Ovary (tissue), 10 donors: ENCODE measurements at regions of chr14 and their contacts with region 1.

Region 1: GRCh38 chr14:88551094-88551870 is 3.5 kb downstream of the PTPN21 start:
- DNase-seq: peak; percentile 77 to 89 (median 82)
- H3K4me3 ChIP-seq: peak overlapping the region; percentile 65
- H3K27ac ChIP-seq: peak overlapping the region; percentile 30 to 53
- H3K4me1 ChIP-seq: peaks cover 3% of the 10 kb centered on the region
- H3K27me3 ChIP-seq: no peaks in the 10 kb centered on the region
- CTCF ChIP-seq: peak in 2 of 3 donors; percentile 42 to 49
- EP300 ChIP-seq: no peak
- POLR2A ChIP-seq: peak; percentile 38

Region 2: DNA sequence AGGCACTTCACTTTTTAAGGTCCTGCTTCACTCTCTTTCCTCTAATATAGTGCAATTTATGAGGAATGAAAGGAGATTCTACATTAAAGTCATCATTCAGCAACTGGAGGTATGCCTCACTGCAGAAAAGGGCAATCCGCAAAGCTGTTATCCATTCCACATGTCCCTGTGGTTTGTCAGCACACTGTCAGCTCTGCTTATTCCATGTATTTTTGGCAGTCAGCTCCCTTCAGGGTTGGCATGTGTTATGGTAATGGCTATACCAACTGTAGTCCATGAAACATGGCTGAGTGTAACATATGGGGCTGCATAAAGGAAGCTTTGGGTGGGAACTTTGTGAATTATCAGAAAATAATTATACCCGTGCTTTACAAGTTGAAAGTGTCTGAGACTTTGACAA is 712.4 kb before region 1 on chr14:
- intact Hi-C with region 1: no loop called
- DNase-seq: no peak
- H3K4me3 ChIP-seq: no peak overlapping the region
- H3K27ac ChIP-seq: no peak overlapping the region
- H3K4me1 ChIP-seq: no peaks in the 10 kb centered on the region
- H3K27me3 ChIP-seq: no peaks in the 10 kb centered on the region
- CTCF ChIP-seq: no peak
- EP300 ChIP-seq: no peak
- POLR2A ChIP-seq: no peak

Region 3: DNA sequence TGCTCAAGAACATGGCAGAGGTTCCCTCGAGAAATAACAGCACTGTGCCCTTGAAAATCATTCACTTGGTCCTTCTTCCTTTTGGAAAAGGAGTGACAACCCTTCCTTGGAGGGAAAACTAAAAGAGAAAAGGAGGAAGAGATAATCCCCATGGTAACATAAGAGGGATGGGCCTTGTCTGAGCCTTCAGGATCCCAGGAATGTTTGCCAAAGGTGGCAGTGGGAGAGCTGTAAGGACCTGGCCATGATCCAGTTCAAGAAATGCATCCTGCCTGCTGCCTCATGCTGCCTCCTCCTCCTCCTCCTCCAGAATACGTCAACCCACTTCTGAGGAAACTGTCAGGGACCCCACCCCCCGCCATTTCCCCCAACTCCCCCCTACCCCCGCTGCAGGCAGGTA is 347.1 kb before region 1 on chr14:
- intact Hi-C with region 1: loop called in 1 of 4 experiments (anchors 5 kb)
- DNase-seq: peak in 1 of 5 donors; percentile 30
- H3K4me3 ChIP-seq: no peak overlapping the region
- H3K27ac ChIP-seq: peak overlapping the region in 1 of 2 donors; percentile 51
- H3K4me1 ChIP-seq: peaks cover 10% of the 10 kb centered on the region
- H3K27me3 ChIP-seq: no peaks in the 10 kb centered on the region
- CTCF ChIP-seq: no peak
- EP300 ChIP-seq: no peak
- POLR2A ChIP-seq: no peak

Region 4: GRCh38 chr14:88333036-88333435 is 218.2 kb before region 1 on chr14:
- intact Hi-C with region 1: no loop called
- DNase-seq: no peak
- H3K4me3 ChIP-seq: no peak overlapping the region
- H3K27ac ChIP-seq: no peak overlapping the region
- H3K4me1 ChIP-seq: no peaks in the 10 kb centered on the region
- H3K27me3 ChIP-seq: no peaks in the 10 kb centered on the region
- CTCF ChIP-seq: no peak
- EP300 ChIP-seq: no peak
- POLR2A ChIP-seq: no peak

Region 5: GRCh38 chr14:88385345-88386101 is 165.8 kb before region 1 on chr14 and contains the start of gene SPATA7:
- intact Hi-C with region 1: loop called in 1 of 4 experiments (anchors 10 kb)
- DNase-seq: peak; percentile 94 to 97 (median 96)
- H3K4me3 ChIP-seq: peak within 1 kb of the TSS; percentile 53
- H3K27ac ChIP-seq: peak within 1 kb of the TSS; percentile 80 to 81
- H3K4me1 ChIP-seq: peaks cover 2% of the 10 kb centered on the region
- H3K27me3 ChIP-seq: no peaks in the 10 kb centered on the region
- CTCF ChIP-seq: peak in 1 of 3 donors; percentile 17
- EP300 ChIP-seq: no peak
- POLR2A ChIP-seq: peak; percentile 92
- total RNA-seq, gene SPATA7: 20.3 to 56.0 (median 30.1) TPM

Region 6: GRCh38 chr14:88463318-88463717 is 88.0 kb before region 1 on chr14:
- intact Hi-C with region 1: no loop called
- DNase-seq: no peak
- H3K4me3 ChIP-seq: no peak overlapping the region
- H3K27ac ChIP-seq: no peak overlapping the region
- H3K4me1 ChIP-seq: peaks cover 3% of the 10 kb centered on the region
- H3K27me3 ChIP-seq: no peaks in the 10 kb centered on the region
- CTCF ChIP-seq: no peak
- EP300 ChIP-seq: no peak
- POLR2A ChIP-seq: no peak

Region 7: DNA sequence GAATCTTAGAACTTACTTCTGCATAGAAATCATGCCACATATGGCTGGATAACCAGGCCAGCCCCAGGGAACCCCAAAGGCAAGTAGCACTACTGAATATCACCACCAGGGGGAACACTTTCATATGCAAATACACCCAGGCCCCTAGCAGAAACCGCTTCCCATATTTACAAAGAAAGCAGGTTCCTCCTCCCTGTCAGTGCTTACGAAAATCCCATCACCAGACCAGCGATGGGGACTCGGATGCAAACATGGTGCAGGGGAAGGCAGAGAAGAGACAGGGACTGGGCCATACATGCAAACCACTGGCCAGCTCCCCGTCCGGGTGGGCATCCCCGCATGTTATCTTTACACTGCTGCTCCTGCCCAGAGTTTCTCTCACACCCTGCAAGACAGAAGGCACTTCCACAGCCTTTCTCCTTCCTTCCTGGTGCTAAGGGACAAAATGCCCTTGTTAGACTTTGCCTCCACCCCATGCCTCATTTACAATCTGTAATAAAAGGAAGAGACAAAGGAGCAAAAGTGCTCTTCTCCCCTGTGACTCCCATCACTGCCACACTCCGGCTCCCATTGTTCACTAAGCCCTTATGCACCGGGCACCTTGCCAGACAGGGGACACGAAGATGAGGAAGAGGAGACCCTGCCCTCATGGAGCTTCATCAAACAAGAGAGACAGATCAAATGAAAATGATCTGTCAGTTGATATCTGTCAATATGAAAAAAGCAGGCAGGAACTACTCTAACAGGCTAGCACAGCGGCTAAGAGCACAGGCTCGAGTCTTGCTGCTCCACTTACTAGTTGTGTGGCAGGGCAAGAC is 58.8 kb before region 1 on chr14:
- intact Hi-C with region 1: loop called in 3 of 4 experiments (anchors 5 to 10 kb)
- DNase-seq: peak; percentile 39 to 73 (median 53)
- H3K4me3 ChIP-seq: no peak overlapping the region
- H3K27ac ChIP-seq: no peak overlapping the region
- H3K4me1 ChIP-seq: peaks cover 2% of the 10 kb centered on the region
- H3K27me3 ChIP-seq: no peaks in the 10 kb centered on the region
- CTCF ChIP-seq: peak; percentile 62 to 82 (median 81)
- EP300 ChIP-seq: no peak
- POLR2A ChIP-seq: no peak

Region 8: GRCh38 chr14:88792572-88793258 is 241.4 kb after region 1 on chr14 and contains the start of gene EML5:
- intact Hi-C with region 1: no loop called
- DNase-seq: peak; percentile 90 to 96 (median 94)
- H3K4me3 ChIP-seq: peak within 1 kb of the TSS; percentile 72
- H3K27ac ChIP-seq: peak within 1 kb of the TSS; percentile 88 to 93
- H3K4me1 ChIP-seq: peaks cover 3% of the 10 kb centered on the region
- H3K27me3 ChIP-seq: no peaks in the 10 kb centered on the region
- CTCF ChIP-seq: peak in 2 of 3 donors; percentile 59 to 65
- EP300 ChIP-seq: no peak
- POLR2A ChIP-seq: peak; percentile 23
- total RNA-seq, gene EML5: 8.5 to 86.5 (median 37.0) TPM